Right lobe of liver (tissue), 6 donors: ENCODE measurements at regions of chr11 and their contacts with region 1.

Region 1: GRCh38 chr11:17986007-17986710 is 26.7 kb downstream of the SERGEF start:
- DNase-seq: no peak
- ATAC-seq: no peak
- H3K4me3 ChIP-seq: no peak overlapping the region
- H3K27ac ChIP-seq: no peak overlapping the region
- H3K4me1 ChIP-seq: peaks cover 0 to 7% (median 0%) of the 10 kb centered on the region in 4 donors
- H3K27me3 ChIP-seq: no peaks in the 10 kb centered on the region
- CTCF ChIP-seq: no peak
- POLR2A ChIP-seq: no peak

Region 2: GRCh38 chr11:17760102-17761029 is 225.8 kb before region 1 on chr11:
- intact Hi-C with region 1: loop called in 1 of 2 experiments (anchors 5 kb)
- DNase-seq: peak; percentile 75 to 78 (median 77)
- ATAC-seq: peak; percentile 98 to 100 (median 98)
- H3K4me3 ChIP-seq: no peak overlapping the region
- H3K27ac ChIP-seq: no peak overlapping the region
- H3K4me1 ChIP-seq: no peaks in the 10 kb centered on the region
- H3K27me3 ChIP-seq: no peaks in the 10 kb centered on the region
- CTCF ChIP-seq: peak; percentile 68 to 86 (median 80)
- POLR2A ChIP-seq: no peak

Region 3: DNA sequence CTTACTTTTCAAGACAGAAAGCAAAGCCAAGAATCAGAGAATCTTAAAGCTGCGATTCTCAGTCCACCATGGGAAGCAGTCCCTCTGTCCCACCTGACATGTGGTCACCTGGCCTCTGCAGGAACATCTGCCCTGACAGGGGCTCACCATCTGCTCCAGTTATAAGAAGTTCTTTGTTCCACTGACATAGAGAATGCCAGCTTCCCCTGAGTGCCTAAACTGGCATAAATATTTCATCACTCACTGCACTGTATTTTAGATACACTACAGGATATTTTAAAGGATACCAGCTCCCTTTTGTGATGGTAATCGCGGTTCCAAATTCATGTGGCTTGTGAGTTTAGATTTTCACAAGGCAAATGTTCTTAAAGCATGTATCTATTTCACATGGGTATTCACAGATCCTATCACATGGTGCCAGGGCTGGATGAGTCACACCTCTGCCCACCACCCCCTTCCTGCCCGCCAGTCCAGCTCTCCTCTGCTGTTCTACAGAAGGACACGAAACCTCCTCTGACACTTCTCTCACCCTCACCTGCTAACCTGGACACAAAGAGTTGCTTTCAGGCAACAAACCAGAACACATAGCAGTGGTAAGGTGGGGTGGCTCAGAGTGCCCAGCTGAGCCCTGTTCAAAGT is 146.1 kb before region 1 on chr11:
- intact Hi-C with region 1: no loop called
- DNase-seq: no peak
- ATAC-seq: no peak
- H3K4me3 ChIP-seq: no peak overlapping the region
- H3K27ac ChIP-seq: no peak overlapping the region
- H3K4me1 ChIP-seq: no peaks in the 10 kb centered on the region
- H3K27me3 ChIP-seq: no peaks in the 10 kb centered on the region
- CTCF ChIP-seq: no peak
- POLR2A ChIP-seq: no peak